H1 (cell line): ENCODE measurements at regions of chr12 and their contacts with region 1.

Region 1: GRCh38 chr12:118187751-118188435 is 52.0 kb downstream of the PEBP1 start:
- DNase-seq: no peak
- H3K4me3 ChIP-seq: no peak overlapping the region
- H3K27ac ChIP-seq: no peak overlapping the region
- H3K4me1 ChIP-seq: peaks cover 0 to 4% (median 3%) of the 10 kb centered on the region in 4 experiments; a peak in 5 of 7 replicates
- H3K27me3 ChIP-seq: no peaks in the 10 kb centered on the region
- CTCF ChIP-seq: no peak
- EP300 ChIP-seq: no peak
- POLR2A ChIP-seq: no peak
- RAD21 ChIP-seq: no peak

Region 2: DNA sequence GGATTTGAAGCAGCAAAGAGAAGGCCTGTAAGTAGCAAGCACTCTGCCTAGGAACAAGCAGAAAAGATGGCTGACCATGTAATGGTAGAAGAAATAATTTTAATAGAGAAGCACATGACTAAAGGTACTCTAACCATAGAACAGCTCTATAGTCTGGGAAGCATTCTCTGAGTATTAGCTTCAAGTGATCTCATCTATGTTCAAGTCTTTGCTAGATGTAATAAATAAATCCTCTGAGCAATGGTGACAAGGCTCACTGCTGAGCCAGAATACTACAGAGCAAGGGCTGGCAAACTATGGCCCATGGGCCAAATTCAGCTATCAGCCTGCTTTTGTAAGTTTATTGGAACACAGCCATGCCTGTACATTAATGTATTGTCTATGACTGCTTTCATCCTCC is 32.8 kb after region 1 on chr12:
- CTCF ChIA-PET with region 1: no interaction called
- POLR2A ChIA-PET with region 1: no interaction called
- DNase-seq: no peak
- H3K4me3 ChIP-seq: no peak overlapping the region
- H3K27ac ChIP-seq: no peak overlapping the region
- H3K4me1 ChIP-seq: no peaks in the 10 kb centered on the region
- H3K27me3 ChIP-seq: no peaks in the 10 kb centered on the region
- CTCF ChIP-seq: no peak
- EP300 ChIP-seq: no peak
- POLR2A ChIP-seq: no peak
- RAD21 ChIP-seq: no peak

Region 3: DNA sequence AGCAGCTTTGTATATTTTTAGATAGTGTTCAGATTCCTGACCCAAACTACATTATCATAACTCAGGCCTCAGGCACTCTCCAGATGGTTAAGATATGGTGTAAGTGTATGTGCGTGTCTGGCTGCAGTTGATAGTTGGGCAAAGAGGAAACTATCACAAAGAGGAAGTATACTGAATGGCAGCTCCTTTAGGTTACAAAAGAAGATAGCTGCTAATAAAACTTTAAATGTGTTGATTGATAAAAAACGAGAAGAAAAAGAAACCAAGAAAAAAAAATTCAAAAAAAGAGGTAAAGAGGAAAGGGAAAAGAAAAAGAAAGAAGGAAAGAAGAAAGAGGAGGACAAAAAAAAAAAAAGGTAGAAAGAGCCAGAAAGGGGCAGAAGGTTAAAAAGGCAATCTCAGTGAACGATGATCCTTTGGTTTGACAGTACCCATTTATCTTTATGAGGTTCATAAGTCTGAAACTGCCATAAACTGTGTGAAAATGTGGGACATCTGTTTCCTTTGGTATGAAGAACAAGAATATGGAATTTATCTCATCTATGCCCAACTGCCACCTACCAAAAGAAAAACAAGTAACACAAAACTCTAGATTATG is 142.6 kb after region 1 on chr12:
- CTCF ChIA-PET with region 1: no interaction called
- POLR2A ChIA-PET with region 1: no interaction called
- DNase-seq: no peak
- H3K4me3 ChIP-seq: no peak overlapping the region
- H3K27ac ChIP-seq: no peak overlapping the region
- H3K4me1 ChIP-seq: no peaks in the 10 kb centered on the region
- H3K27me3 ChIP-seq: no peaks in the 10 kb centered on the region
- CTCF ChIP-seq: no peak
- EP300 ChIP-seq: no peak
- POLR2A ChIP-seq: no peak
- RAD21 ChIP-seq: no peak

Region 4: DNA sequence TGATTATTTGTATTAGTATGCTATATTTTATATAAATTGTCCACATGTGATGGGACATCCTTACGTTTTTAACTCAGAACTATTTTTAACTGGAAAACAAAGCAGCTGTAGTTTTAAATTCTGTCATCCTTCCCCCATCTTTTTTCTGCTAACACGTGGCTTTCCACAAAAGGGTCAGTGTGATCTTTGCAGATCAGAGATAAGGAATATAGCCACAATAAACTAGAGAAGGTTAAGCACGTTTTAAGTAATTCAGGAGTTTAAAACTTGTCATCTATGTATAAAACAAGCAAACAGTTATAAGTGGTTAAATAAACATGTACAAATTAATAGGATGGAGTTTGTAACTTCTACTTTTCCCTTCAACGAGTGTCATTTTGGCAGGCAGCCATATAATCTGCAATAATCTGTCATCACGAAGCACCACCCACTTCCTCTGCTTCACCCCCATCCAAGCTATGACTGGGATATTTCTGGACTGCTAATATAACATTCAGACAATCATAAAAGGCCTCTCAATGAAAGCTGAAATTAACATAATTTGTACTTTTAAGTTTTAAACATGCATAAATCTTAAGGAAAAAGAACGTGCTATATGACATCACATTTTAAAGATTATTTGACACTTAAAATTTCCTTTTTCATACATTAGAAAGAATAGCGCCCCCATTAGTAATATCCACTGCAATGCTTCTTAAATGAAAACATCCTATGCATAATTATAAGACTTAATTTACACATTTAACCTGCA is 169.5 kb after region 1 on chr12:
- CTCF ChIA-PET with region 1: interaction called, 12 read pairs
- POLR2A ChIA-PET with region 1: no interaction called
- DNase-seq: no peak
- H3K4me3 ChIP-seq: no peak overlapping the region
- H3K27ac ChIP-seq: no peak overlapping the region
- H3K4me1 ChIP-seq: no peaks in the 10 kb centered on the region
- H3K27me3 ChIP-seq: no peaks in the 10 kb centered on the region
- CTCF ChIP-seq: no peak
- EP300 ChIP-seq: no peak
- POLR2A ChIP-seq: no peak
- RAD21 ChIP-seq: no peak

Region 5: DNA sequence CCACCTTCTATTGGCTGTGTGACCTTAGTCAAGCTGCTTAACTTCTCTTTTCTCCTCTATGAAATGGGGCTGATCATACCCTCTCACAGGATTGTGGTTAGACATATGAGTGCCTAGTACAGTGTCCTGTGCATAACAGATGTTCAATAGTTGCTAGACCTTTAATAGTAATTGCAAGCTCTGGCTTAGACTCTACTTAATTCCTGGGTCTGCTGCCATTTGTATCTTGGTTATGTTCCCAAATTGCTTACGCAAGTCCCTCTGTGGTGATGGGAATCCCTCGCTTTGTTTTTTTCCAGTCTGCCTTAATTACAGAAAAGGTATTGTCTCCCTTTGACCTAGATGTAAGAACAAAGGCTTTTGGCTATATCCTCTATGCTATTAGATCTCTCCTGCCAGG is 203.5 kb after region 1 on chr12:
- CTCF ChIA-PET with region 1: interaction called, 12 read pairs
- POLR2A ChIA-PET with region 1: no interaction called
- DNase-seq: no peak
- H3K4me3 ChIP-seq: no peak overlapping the region
- H3K27ac ChIP-seq: no peak overlapping the region
- H3K4me1 ChIP-seq: no peaks in the 10 kb centered on the region
- H3K27me3 ChIP-seq: no peaks in the 10 kb centered on the region
- CTCF ChIP-seq: no peak
- EP300 ChIP-seq: no peak
- POLR2A ChIP-seq: no peak
- RAD21 ChIP-seq: no peak